ENCODE measurements at regions of chr10 and their contacts with region 1.

Region 1: DNA sequence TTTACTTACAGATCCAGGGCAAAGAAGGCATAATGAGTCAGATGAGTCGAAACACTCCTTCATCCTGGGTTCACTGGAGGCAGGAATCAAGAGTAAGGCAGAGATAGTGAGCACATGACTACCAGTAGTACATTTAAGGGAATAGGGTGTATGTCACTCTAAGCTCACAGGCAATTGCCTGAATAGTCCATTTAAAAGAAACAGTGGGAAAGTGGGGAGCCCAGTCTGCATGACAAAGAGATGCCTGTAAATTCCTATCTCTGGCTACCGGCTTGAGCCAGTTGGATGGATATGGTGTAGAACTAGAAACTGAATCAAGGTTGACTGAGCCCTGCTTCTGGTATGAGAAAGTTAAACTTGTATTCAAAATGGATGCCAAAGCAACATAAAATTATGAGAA is 861.5 kb upstream of the ZWINT start:
- DNase-seq: no peak
- ATAC-seq: no peak
- H3K4me3 ChIP-seq: no peak overlapping the region
- H3K27ac ChIP-seq: no peak overlapping the region
- H3K4me1 ChIP-seq: no peaks in the 10 kb centered on the region
- H3K27me3 ChIP-seq: no peaks in the 10 kb centered on the region
- CTCF ChIP-seq: no peak

Region 2: GRCh38 chr10:56298941-56299340 is 923.7 kb before region 1 on chr10:
- intact Hi-C with region 1: loop called in 1 of 2 experiments (anchors 5 kb)
- DNase-seq: no peak
- ATAC-seq: no peak
- H3K4me3 ChIP-seq: no peak overlapping the region
- H3K27ac ChIP-seq: no peak overlapping the region
- H3K4me1 ChIP-seq: no peaks in the 10 kb centered on the region
- H3K27me3 ChIP-seq: no peaks in the 10 kb centered on the region
- CTCF ChIP-seq: no peak

Region 3: GRCh38 chr10:57168611-57169240 is 53.9 kb before region 1 on chr10:
- intact Hi-C with region 1: no loop called
- DNase-seq: no peak
- ATAC-seq: no peak
- H3K4me3 ChIP-seq: no peak overlapping the region
- H3K27ac ChIP-seq: no peak overlapping the region
- H3K4me1 ChIP-seq: no peaks in the 10 kb centered on the region
- H3K27me3 ChIP-seq: no peaks in the 10 kb centered on the region
- CTCF ChIP-seq: no peak

Measured in psoas muscle (tissue), 8 donors.